ENCODE measurements at regions of chr18 and their contacts with region 1.

Region 1: GRCh38 chr18:32026491-32027086 is 8.0 kb downstream of the RNF125 start:
- DNase-seq: no peak
- ATAC-seq: peak; percentile 38
- H3K4me3 Mint-ChIP-seq: peak overlapping the region; percentile 77
- H3K27ac Mint-ChIP-seq: peak overlapping the region; percentile 78
- H3K4me1 Mint-ChIP-seq: peaks cover 49% of the 10 kb centered on the region
- H3K27me3 Mint-ChIP-seq: no peaks in the 10 kb centered on the region

Region 2: DNA sequence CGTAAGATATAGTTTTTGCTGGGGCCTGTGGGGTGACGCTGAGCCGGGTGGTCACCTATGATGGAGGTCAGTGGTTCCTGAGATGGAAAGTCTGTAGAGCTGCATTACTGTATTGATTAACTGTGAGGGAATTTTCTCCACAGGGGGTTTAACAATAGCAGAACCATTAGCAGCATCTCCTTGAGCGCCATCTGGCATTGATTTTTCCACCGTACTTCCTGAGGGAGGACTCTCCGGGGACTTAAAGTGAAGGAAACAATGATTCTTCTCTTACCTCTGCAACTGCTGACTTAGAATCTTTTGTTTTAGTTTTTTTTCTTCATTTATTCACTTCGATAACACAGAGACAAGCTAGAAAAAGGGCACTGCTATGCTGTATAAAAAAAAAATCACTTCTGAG is 30.6 kb before region 1 on chr18:
- POLR2A ChIA-PET with region 1: no interaction called
- DNase-seq: no peak
- ATAC-seq: no peak
- H3K4me3 Mint-ChIP-seq: no peak overlapping the region
- H3K27ac Mint-ChIP-seq: no peak overlapping the region
- H3K4me1 Mint-ChIP-seq: no peaks in the 10 kb centered on the region
- H3K27me3 Mint-ChIP-seq: peaks cover 2% of the 10 kb centered on the region

Region 3: DNA sequence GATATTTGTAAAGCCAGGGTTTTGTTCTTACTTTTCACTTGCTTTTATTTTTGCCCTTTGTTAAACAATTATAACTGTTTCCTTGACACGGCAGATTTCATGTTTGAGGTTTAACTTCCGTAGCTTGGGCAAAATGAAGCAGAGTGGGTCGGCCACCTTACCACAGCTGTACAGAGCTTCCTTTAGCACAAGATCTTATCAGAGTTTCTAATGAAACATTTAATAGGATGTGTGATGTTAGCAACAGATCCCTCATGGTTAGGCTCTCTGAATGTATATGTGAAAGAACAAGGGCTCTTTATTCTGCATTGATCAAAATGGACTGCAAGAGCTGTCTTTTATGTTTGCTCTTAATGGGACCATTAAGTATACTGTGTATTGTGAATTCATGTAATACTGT is 14.3 kb after region 1 on chr18:
- POLR2A ChIA-PET with region 1: interaction called, 21 read pairs
- DNase-seq: no peak
- ATAC-seq: peak; percentile 95
- H3K4me3 Mint-ChIP-seq: peak overlapping the region; percentile 85
- H3K27ac Mint-ChIP-seq: peak overlapping the region; percentile 94
- H3K4me1 Mint-ChIP-seq: peaks cover 49% of the 10 kb centered on the region
- H3K27me3 Mint-ChIP-seq: no peaks in the 10 kb centered on the region